ENCODE measurements at regions of chr15 and their contacts with region 1.

Region 1: GRCh38 chr15:64430000-64430735 is 30.2 kb upstream of the ZNF609 start:
- DNase-seq: no peak
- ATAC-seq: no peak
- H3K4me3 ChIP-seq: no peak overlapping the region
- H3K27ac ChIP-seq: no peak overlapping the region
- H3K4me1 ChIP-seq: no peaks in the 10 kb centered on the region
- H3K27me3 ChIP-seq: no peaks in the 10 kb centered on the region
- CTCF ChIP-seq: no peak

Region 2: GRCh38 chr15:64651573-64652260 is 221.5 kb after region 1 on chr15:
- CTCF ChIA-PET with region 1: no interaction called
- POLR2A ChIA-PET with region 1: no interaction called
- intact Hi-C with region 1: loop called (anchors 10 kb)
- DNase-seq: peak; percentile 10
- ATAC-seq: no peak; the same call in 1 of the 2 replicates
- H3K4me3 ChIP-seq: no peak overlapping the region
- H3K27ac ChIP-seq: no peak overlapping the region
- H3K4me1 ChIP-seq: no peaks in the 10 kb centered on the region; the same call in 1 of the 2 replicates
- H3K27me3 ChIP-seq: no peaks in the 10 kb centered on the region
- CTCF ChIP-seq: no peak

Region 3: DNA sequence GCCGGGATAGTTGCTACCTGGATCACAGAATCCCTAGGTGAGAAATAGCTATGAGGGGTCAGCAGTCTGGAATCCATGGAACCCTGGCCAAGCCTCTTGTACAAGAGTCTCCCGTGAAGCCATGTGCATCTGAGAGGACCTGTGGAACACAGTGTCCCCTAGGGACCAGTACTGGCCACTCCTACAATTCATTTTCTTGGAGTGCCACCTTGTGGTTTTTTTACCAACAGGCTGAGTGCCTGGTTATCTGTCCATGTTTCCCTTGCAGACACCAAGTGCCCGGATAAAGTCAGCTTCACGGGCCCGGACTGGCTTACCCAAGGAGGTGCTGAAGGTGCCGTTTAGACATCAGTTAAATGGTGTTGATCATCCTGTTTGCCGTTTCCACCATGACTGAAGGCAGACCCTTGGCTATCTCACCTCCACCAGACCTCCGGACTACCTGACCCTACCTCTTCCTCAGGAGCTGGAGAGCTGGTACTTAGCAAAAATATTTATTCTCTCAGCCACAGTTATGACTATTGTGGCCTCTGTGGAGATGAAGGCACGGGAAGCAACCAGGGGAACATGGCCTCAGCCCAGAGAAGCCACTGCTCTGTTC is 251.4 kb after region 1 on chr15:
- CTCF ChIA-PET with region 1: no interaction called
- POLR2A ChIA-PET with region 1: no interaction called
- intact Hi-C with region 1: loop called (anchors 1 kb)
- DNase-seq: peak; percentile 77
- ATAC-seq: peak; percentile 97
- H3K4me3 ChIP-seq: no peak overlapping the region
- H3K27ac ChIP-seq: no peak overlapping the region
- H3K4me1 ChIP-seq: no peaks in the 10 kb centered on the region
- H3K27me3 ChIP-seq: no peaks in the 10 kb centered on the region
- CTCF ChIP-seq: peak; percentile 87